HCT116 (cell line): ENCODE measurements at regions of chr2 and their contacts with region 1.

Region 1: DNA sequence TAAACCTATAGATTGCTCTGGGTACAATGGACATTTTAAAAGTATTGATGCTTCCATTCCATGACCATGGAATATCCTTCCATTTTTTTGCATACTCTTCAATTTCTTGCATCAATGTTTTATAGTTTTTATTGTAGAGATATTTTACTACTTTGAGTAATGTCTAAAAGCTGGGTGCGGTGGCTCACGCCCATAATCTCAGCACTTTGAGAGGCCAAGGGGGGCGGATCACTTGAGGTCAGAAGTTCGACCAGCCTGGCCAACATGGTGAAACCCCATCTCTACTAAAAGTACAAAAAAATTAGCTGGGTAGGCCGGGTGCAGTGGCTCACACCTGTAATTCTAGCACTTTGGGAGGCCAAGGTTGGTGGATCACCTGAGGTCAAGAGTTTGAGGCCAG is 88.5 kb downstream of the TLK1 start:
- DNase-seq: no peak
- ATAC-seq: no peak
- H3K4me3 ChIP-seq: no peak overlapping the region
- H3K27ac ChIP-seq: no peak overlapping the region
- H3K4me1 ChIP-seq: no peaks in the 10 kb centered on the region
- H3K27me3 ChIP-seq: no peaks in the 10 kb centered on the region
- CTCF ChIP-seq: no peak
- POLR2A ChIP-seq: no peak
- RAD21 ChIP-seq: no peak

Region 2: GRCh38 chr2:170928824-170929685 is 143.1 kb before region 1 on chr2 and contains the start of gene GORASP2:
- CTCF ChIA-PET with region 1: no interaction called
- POLR2A ChIA-PET with region 1: no interaction called
- RAD21 ChIA-PET with region 1: no interaction called
- intact Hi-C with region 1: no loop called
- DNase-seq: peak; percentile 99
- ATAC-seq: peak; percentile 91
- H3K4me3 ChIP-seq: peak within 1 kb of the TSS; percentile 83 to 93
- H3K27ac ChIP-seq: peak within 1 kb of the TSS; percentile 86
- H3K4me1 ChIP-seq: peaks cover 11 to 21% of the 10 kb centered on the region in 2 experiments
- H3K27me3 ChIP-seq: no peaks in the 10 kb centered on the region
- CTCF ChIP-seq: peak; percentile 69 to 95 (median 84)
- POLR2A ChIP-seq: peak; percentile 71
- RAD21 ChIP-seq: peak; percentile 75
- total RNA-seq, gene GORASP2: 87.9 TPM

Region 3: DNA sequence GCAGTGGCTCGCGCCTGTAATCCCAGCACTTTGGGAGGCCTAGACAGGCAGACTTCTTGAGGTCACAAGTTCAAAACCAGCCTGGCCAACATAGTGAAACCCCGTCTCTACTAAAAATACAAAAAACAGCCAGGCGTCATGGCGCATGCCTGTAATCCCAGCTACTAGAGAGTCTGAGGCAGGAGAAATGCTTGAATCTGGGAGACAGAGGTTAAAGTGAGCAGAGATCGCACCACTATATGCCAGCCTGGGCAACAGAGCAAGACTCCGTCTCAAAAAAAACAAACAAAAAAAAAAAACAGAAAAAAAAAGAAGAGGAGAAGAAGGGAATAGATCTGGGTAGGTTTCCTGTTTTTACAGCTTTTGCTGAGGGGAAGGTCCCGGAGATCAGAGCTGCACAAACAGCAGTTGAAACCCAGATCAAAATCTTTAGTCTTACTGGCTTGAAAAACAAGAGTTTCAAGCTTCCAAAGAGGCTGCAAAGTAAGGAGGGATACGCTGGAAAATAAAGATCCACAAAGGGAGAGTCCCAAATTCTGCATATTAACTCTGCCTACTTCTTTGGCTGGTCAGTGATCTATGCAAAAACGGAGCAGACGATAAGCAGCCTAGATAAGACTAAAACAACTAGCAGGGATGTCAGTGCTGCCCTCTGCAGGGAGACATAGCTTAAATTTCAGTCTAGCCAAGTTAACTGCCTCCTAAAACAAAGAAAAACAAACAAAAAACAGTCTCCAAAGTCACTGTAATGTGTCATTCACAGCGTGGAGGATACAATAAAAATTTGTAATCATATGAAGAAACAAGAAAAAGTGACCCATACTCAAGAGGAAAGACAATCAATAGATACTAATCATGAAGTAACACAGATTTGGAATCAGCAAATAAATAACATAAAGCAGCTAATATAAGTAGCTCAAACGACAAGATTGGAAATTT is 14.5 kb after region 1 on chr2:
- CTCF ChIA-PET with region 1: interaction called, 10 read pairs
- POLR2A ChIA-PET with region 1: no interaction called
- RAD21 ChIA-PET with region 1: no interaction called
- intact Hi-C with region 1: no loop called
- DNase-seq: peak; percentile 19
- ATAC-seq: peak; percentile 86
- H3K4me3 ChIP-seq: no peak overlapping the region
- H3K27ac ChIP-seq: no peak overlapping the region
- H3K4me1 ChIP-seq: no peaks in the 10 kb centered on the region
- H3K27me3 ChIP-seq: no peaks in the 10 kb centered on the region
- CTCF ChIP-seq: peak; percentile 28 to 77 (median 72); a peak in 5 of 6 replicates
- POLR2A ChIP-seq: no peak
- RAD21 ChIP-seq: peak; percentile 41; the same call in 1 of the 2 replicates

Region 4: DNA sequence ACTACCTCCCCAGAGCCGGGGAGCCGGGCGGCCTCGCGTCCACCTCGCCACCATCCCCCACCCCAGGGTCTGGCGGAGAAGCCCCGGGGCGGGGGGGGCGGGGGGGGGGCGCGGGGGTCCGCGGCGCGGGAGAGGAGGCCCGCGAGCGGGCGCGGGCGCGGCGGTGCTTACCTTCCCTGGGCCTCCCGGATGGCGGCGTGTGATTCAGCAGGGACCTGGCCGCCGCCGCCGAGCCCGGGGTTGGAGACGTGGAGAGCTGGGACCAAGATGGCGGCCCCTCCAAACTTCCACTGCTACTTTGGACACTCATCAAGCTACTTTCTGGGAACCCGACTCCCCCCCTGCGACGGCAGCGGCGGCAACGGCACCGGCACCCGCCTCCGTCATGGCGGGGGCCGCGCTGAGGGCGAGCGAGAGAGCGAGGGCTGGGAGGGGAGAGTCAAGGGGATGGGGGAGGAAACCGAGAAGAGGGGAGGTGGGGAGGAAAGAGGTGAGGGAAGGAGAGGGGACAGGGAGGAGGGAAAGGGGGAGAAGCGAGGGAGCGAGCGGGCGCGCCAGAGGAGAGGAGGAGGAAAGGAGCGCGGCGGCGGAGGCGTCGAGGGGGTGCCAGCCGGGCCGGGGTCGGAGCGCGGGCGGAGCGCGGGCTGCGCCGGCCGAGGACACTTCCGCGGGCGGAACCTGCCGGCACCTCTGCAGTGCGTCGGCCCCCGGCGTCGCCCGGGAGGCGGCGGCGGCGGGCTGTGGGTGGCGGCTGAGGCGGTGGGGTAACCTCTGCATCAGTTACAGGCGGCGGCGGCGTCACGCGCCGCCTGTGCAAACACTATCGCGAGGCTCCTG is 88.2 kb after region 1 on chr2 and contains the start of gene TLK1:
- CTCF ChIA-PET with region 1: no interaction called
- POLR2A ChIA-PET with region 1: no interaction called
- RAD21 ChIA-PET with region 1: no interaction called
- intact Hi-C with region 1: no loop called
- DNase-seq: peak; percentile 21
- ATAC-seq: peak; percentile 77
- H3K4me3 ChIP-seq: peak within 1 kb of the TSS; percentile 87 to 94
- H3K27ac ChIP-seq: peak within 1 kb of the TSS; percentile 94
- H3K4me1 ChIP-seq: peaks cover 4 to 19% of the 10 kb centered on the region in 2 experiments; a peak in 3 of 4 replicates
- H3K27me3 ChIP-seq: no peaks in the 10 kb centered on the region
- CTCF ChIP-seq: no peak
- POLR2A ChIP-seq: peak; percentile 20
- RAD21 ChIP-seq: no peak
- total RNA-seq, gene TLK1: 57.7 TPM

Region 5: DNA sequence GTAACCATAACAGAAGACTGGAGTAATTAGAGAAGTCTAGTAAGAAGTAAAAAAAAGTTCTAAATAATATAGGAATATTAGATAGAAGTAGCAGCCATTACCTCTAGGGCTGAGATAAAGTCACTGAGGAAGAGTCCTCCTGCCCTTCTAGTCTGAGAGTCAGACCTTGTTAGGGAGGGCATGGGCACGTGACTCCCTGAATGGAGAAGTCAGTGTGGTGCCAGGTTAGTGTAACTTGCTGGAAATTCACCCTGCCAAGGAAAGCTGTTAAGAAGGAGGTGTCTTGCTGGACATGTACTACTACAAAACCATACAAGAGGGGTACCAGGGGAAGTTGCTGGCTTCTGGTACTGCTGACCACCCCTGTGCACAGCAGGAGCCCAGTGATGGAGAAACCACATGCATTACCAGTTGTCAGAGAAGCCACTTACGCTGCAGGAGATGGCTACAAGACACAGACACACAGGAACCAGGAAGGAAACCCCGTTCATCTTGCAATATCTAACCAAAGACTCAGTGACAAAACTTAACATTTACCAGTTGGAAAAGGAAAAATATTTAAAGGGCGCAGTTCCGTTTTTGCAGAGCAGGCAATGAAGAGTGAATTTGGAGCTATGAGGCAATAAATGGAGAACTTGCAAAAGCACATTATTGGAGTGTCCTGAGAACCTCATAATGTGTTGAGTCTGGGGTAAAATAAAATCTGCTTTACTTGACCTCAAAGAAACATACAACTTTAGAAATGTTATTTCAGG is 165.8 kb after region 1 on chr2:
- CTCF ChIA-PET with region 1: no interaction called
- POLR2A ChIA-PET with region 1: no interaction called
- RAD21 ChIA-PET with region 1: no interaction called
- intact Hi-C with region 1: no loop called
- DNase-seq: no peak
- ATAC-seq: no peak
- H3K4me3 ChIP-seq: no peak overlapping the region
- H3K27ac ChIP-seq: no peak overlapping the region
- H3K4me1 ChIP-seq: no peaks in the 10 kb centered on the region
- H3K27me3 ChIP-seq: no peaks in the 10 kb centered on the region
- CTCF ChIP-seq: no peak
- POLR2A ChIP-seq: no peak
- RAD21 ChIP-seq: no peak